ENCODE measurements at regions of chr19 and their contacts with region 1.

Region 1: GRCh38 chr19:34974646-34975045 is 10.6 kb upstream of the ZNF792 start:
- DNase-seq: no peak
- ATAC-seq: no peak
- H3K4me3 Mint-ChIP-seq: no peak overlapping the region
- H3K27ac Mint-ChIP-seq: no peak overlapping the region
- H3K4me1 Mint-ChIP-seq: peaks cover 5% of the 10 kb centered on the region
- H3K27me3 Mint-ChIP-seq: peaks cover 13% of the 10 kb centered on the region
- CTCF ChIP-seq: no peak

Region 2: GRCh38 chr19:34999498-35000341 is 25.1 kb after region 1 on chr19 and contains the start of gene GRAMD1A:
- CTCF ChIA-PET with region 1: no interaction called
- POLR2A ChIA-PET with region 1: interaction called, 4 read pairs
- intact Hi-C with region 1: loop called (anchors 1 kb)
- DNase-seq: peak; percentile 77
- ATAC-seq: peak; percentile 60
- H3K4me3 Mint-ChIP-seq: peak within 1 kb of the TSS; percentile 87
- H3K27ac Mint-ChIP-seq: peak within 1 kb of the TSS; percentile 84
- H3K4me1 Mint-ChIP-seq: peaks cover 63% of the 10 kb centered on the region
- H3K27me3 Mint-ChIP-seq: no peaks in the 10 kb centered on the region
- CTCF ChIP-seq: no peak
- total RNA-seq, gene GRAMD1A: 52.9 and 54.4 TPM in 2 replicates

Region 3: DNA sequence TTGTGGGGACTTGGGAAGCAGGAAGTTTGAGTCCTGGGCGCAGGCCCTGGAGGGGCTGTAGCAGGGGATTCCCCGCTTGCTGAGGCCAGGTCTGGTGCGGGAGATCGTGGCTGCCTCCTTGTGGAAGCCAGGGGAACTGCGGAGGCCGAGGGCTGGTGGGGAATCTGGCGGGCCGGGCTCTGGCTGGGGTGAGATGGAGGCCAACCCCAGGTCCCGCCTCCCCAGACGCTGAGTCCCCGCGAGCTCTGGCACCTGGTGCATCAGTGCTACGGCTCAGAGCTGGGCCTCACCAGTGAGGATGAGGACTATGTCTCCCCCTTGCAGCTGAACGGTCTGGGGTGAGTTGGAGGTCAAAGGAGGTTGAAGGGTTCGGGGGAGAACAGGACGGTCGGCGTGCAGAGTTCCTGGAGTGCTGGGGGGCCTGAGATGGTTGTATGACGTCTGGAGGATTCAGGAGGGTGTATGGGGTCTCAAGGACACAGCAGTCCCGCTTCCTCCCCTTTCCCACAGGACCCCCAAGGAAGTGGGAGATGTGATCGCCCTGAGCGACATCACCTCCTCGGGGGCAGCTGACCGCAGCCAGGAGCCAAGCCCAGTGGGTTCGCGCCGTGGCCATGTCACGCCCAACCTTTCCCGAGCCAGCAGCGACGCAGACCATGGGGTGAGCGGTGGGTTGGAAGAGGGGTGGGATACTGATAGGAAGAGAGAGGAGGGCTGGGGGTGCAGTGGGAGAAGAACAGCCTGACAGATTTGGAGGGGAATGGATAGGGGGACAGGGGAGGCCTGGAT is 38.6 kb after region 1 on chr19:
- CTCF ChIA-PET with region 1: interaction called, 48 read pairs
- POLR2A ChIA-PET with region 1: interaction called, 4 read pairs
- intact Hi-C with region 1: loop called (anchors 1 kb)
- DNase-seq: peak; percentile 74
- ATAC-seq: peak; percentile 96
- H3K4me3 Mint-ChIP-seq: no peak overlapping the region
- H3K27ac Mint-ChIP-seq: no peak overlapping the region
- H3K4me1 Mint-ChIP-seq: peaks cover 31% of the 10 kb centered on the region
- H3K27me3 Mint-ChIP-seq: no peaks in the 10 kb centered on the region
- CTCF ChIP-seq: peak; percentile 61

Region 4: GRCh38 chr19:35044317-35045117 is 69.9 kb after region 1 on chr19:
- CTCF ChIA-PET with region 1: no interaction called
- POLR2A ChIA-PET with region 1: no interaction called
- intact Hi-C with region 1: loop called (anchors 2 kb)
- DNase-seq: peak; percentile 49
- ATAC-seq: no peak
- H3K4me3 Mint-ChIP-seq: no peak overlapping the region
- H3K27ac Mint-ChIP-seq: no peak overlapping the region
- H3K4me1 Mint-ChIP-seq: peaks cover 33% of the 10 kb centered on the region
- H3K27me3 Mint-ChIP-seq: peaks cover 3% of the 10 kb centered on the region
- CTCF ChIP-seq: peak; percentile 92

Region 5: DNA sequence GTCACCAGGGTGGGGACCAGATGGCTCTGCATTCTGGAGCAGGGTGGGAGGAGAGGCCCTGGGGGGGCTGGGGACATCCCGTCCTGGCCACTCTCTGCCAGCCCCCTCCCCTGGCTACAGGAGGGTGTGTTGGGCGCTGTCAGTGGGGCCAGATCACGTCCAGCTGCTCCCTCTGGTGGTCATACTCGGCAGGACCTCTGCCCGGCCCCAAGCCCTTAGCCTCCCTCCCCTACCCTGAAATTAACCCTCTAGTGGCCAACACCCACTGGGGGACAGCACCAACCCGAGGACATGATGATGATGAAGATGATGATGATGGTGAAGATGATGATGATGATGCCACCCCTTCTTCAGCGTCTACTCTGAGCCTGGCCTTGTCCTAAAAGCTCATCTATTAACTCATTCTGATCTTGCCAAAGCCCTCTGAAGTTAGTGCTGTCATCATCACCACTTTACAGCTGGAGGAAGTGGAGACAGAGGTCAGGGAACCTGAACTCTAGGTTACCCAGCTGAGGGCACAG is 160.8 kb after region 1 on chr19:
- CTCF ChIA-PET with region 1: no interaction called
- POLR2A ChIA-PET with region 1: no interaction called
- intact Hi-C with region 1: loop called (anchors 1 kb)
- DNase-seq: peak; percentile 63
- ATAC-seq: peak; percentile 90
- H3K4me3 Mint-ChIP-seq: no peak overlapping the region
- H3K27ac Mint-ChIP-seq: no peak overlapping the region
- H3K4me1 Mint-ChIP-seq: peaks cover 15% of the 10 kb centered on the region
- H3K27me3 Mint-ChIP-seq: no peaks in the 10 kb centered on the region
- CTCF ChIP-seq: peak; percentile 75

Measured in activated B cell treated with CpG ODN at 0.5 μM for 24 hours (primary cell).